Lower leg skin (tissue), 4 donors: ENCODE measurements at regions of chr15 and their contacts with region 1.

Region 1: GRCh38 chr15:23415321-23415865 is 31.6 kb downstream of the GOLGA6L2 start:
- DNase-seq: no peak
- H3K4me3 ChIP-seq: no peak overlapping the region
- CTCF ChIP-seq: no peak
- POLR2A ChIP-seq: no peak

Region 2: GRCh38 chr15:23467110-23467600 is 51.8 kb after region 1 on chr15:
- intact Hi-C with region 1: loop called (anchors 2 kb)
- DNase-seq: no peak
- H3K4me3 ChIP-seq: no peak overlapping the region
- CTCF ChIP-seq: no peak
- POLR2A ChIP-seq: no peak